ENCODE measurements at regions of chr9 and their contacts with region 1.

Region 1: DNA sequence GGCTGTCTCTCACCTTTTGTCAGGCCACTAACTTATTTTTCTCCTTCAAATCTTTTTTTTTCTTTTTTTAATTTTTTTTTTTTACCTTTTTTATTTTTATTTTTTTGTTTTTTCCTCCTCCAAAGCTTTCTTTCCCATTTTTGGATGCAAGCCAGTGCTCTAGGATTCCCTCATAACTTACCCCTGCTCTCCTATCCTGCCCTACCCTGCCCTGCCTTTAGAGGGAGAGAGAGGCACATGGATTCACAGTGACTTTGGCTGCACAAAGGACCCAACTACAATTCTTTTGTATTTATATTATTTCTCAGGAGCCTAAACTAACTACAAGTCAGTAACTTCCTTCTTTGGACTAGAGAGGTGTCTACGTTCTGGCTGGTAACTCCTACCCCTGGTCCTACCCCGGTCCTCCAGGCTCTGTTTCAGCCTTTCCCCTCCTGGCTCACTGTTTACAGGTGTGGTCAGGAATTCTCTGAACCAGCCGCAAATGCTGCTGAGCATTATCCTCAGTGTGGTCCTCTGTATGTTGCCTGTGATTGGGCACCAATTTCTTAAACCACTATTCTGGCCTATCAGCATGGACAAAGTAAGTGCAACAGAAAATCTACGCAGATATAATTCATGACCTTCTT is 8.4 kb upstream of the RUSC2 start:
- DNase-seq: peak; percentile 74 to 75
- ATAC-seq: peak; percentile 73 to 80; a peak in 4 of 6 replicates
- H3K4me3 ChIP-seq: no peak overlapping the region
- H3K27ac ChIP-seq: peak overlapping the region; percentile 21 to 68
- H3K4me1 ChIP-seq: peaks cover 31% of the 10 kb centered on the region
- CTCF ChIP-seq: peak; percentile 77
- EP300 ChIP-seq: no peak
- POLR2A ChIP-seq: no peak
- RAD21 ChIP-seq: peak; percentile 88 to 95

Region 2: GRCh38 chr9:35079426-35080341 is 401.8 kb before region 1 on chr9 and contains the start of gene FANCG:
- CTCF ChIA-PET with region 1: interaction called, 17 read pairs
- POLR2A ChIA-PET with region 1: no interaction called
- DNase-seq: peak; percentile 94 to 95
- ATAC-seq: peak; percentile 96
- H3K4me3 ChIP-seq: peak within 1 kb of the TSS; percentile 71
- H3K27ac ChIP-seq: peak within 1 kb of the TSS; percentile 86 to 96
- H3K4me1 ChIP-seq: peaks cover 14% of the 10 kb centered on the region; the same call in 2 of the 3 replicates
- CTCF ChIP-seq: no peak
- EP300 ChIP-seq: no peak
- POLR2A ChIP-seq: peak; percentile 88
- RAD21 ChIP-seq: no peak
- polyA plus RNA-seq, gene FANCG: 34.9 and 39.7 TPM in 2 replicates

Region 3: DNA sequence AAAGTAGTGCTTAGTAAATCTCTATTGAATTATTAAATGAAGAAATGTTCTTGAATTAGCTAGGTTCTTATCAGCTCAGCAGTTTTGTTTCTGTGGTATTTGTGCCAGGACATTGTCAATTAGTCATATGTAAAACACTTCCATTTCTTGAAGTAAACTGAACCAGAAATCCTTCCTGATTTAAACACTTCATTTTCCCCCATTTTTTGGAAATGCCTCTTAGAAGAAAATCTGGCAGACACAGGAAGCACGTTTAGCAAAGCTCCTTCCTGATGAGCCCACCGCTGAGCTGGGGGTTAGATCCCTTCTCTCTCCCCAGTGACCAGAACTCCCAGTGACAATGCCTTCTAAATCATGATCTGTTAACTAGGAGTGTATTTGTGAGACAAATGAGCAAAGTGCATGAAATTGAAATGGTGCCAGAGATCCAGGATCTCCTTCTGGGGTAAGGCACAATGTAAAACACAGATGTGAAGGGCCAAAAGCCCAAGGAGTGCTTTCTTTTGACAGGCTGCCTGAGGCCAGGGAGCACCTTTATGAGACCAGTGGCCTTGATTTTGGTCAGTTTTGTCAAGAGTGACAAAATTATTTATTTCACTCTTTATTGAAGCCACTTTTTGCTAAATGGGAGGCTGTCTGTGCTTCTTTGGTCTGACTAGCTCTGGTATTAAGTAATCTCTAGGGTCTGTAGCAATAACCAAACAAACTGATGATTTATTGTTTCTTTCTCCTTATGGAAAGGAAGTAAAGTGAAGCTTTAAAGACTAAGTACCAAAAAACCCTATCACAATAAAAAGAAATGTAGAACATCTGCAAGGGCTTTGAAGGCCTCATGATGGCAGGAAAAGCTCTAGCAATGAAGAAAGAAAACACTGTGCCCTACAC is 17.1 kb before region 1 on chr9:
- CTCF ChIA-PET with region 1: interaction called, 11 read pairs
- POLR2A ChIA-PET with region 1: no interaction called
- DNase-seq: no peak
- ATAC-seq: peak; percentile 50 to 64; a peak in 4 of 6 replicates
- H3K4me3 ChIP-seq: no peak overlapping the region
- H3K27ac ChIP-seq: peak overlapping the region; percentile 67 to 68
- H3K4me1 ChIP-seq: peaks cover 35% of the 10 kb centered on the region
- CTCF ChIP-seq: no peak
- EP300 ChIP-seq: peak in 1 of 2 experiments; percentile 56; a peak in 1 of 5 replicates
- POLR2A ChIP-seq: no peak
- RAD21 ChIP-seq: peak in 1 of 2 experiments; percentile 47; a peak in 1 of 5 replicates

Region 4: GRCh38 chr9:35563791-35564197 is 82.3 kb after region 1 on chr9:
- CTCF ChIA-PET with region 1: interaction called, 183 read pairs
- POLR2A ChIA-PET with region 1: no interaction called
- DNase-seq: no peak
- ATAC-seq: peak; percentile 17 to 35; a peak in 4 of 6 replicates
- H3K4me3 ChIP-seq: no peak overlapping the region
- H3K27ac ChIP-seq: peak overlapping the region in 1 of 2 experiments; percentile 20; a peak in 1 of 6 replicates
- H3K4me1 ChIP-seq: no peaks in the 10 kb centered on the region; the same call in 2 of the 3 replicates
- CTCF ChIP-seq: no peak
- EP300 ChIP-seq: no peak
- POLR2A ChIP-seq: no peak
- RAD21 ChIP-seq: no peak

Region 5: GRCh38 chr9:35579130-35579529 is 97.7 kb after region 1 on chr9:
- CTCF ChIA-PET with region 1: no interaction called
- POLR2A ChIA-PET with region 1: no interaction called
- DNase-seq: no peak
- ATAC-seq: no peak
- H3K4me3 ChIP-seq: no peak overlapping the region
- H3K27ac ChIP-seq: no peak overlapping the region
- H3K4me1 ChIP-seq: no peaks in the 10 kb centered on the region
- CTCF ChIP-seq: no peak
- EP300 ChIP-seq: no peak
- POLR2A ChIP-seq: no peak
- RAD21 ChIP-seq: no peak

Measured in A549 (cell line).